ENCODE measurements at regions of chr7 and their contacts with region 1.

Region 1: DNA sequence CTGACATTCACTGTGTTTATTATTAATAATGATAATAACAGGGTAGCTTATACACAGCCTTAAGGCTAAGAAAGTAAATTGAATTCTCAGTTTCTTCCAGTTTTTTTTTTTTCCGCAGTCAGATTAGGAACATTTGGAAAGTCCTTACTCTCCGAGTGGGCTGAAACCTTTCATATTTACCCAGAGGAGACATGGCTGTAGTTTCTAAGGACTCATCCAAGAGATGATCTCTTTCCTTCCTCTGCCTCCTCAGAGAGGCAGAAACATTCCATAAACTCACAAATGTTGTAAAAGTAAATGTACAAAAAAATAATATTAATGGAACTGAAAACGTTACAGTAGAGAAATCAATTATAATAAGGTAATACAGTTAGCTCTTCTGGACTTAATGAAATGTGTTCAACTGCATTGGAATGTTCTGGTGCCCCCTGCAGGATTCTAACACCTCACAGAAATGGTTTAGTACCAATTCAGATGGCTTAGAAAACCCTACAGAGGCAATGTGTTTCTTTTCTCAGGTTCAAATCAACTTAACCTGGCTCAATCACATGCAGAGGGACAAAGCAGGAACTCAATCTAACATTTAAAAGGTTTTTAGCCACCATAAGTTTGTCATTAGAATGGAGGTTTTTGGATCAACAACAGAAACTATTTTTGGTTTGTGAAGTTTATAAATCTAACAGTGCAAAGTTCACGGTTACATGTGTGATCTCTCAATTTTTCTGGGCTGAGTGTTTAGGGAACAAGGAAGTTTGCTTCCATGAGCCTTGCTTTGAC is 71.7 kb downstream of the ICA1 start:
- DNase-seq: peak; percentile 80
- H3K4me3 Mint-ChIP-seq: no peak overlapping the region
- H3K27ac Mint-ChIP-seq: peak overlapping the region; percentile 16
- H3K4me1 Mint-ChIP-seq: peaks cover 30% of the 10 kb centered on the region
- H3K27me3 Mint-ChIP-seq: peaks cover 8% of the 10 kb centered on the region

Region 2: DNA sequence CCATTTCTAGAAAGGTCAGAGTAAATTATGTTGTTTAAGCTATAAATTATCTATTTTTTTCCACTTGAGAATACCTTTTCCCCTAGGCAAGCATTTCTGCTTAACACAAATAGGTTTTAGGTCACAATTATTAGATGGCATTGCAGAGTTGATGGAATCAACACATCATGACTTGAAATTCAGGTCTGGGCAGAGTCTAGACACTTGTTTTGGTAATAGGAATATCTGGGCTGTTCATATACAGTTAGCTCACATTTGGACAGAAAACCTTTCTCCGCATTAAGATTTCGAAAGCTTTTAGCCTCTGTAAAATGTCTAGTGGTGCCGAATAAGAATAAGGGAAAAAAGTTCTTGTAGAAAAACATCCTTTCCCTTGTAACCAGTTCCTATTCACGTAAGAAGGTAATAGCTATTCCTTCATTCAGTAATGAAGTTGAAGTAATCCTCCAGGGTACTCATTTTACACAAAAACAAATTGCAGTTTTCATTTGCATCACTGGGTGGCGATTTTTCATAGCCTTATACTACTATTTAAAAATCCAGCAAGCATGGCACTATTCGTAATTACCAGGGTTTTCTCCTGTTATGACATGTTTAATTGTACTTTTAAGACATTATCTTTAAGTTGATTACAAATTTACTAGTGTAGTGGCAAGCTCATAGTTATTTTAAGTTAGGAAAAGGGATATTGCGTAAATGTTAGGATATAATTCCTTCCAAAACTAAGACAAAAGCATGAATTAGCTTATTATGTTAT is 508.9 kb before region 1 on chr7:
- CTCF ChIA-PET with region 1: interaction called, 11 read pairs
- POLR2A ChIA-PET with region 1: no interaction called
- DNase-seq: peak; percentile 67
- H3K4me3 Mint-ChIP-seq: no peak overlapping the region
- H3K27ac Mint-ChIP-seq: peak overlapping the region; percentile 16
- H3K4me1 Mint-ChIP-seq: peaks cover 20% of the 10 kb centered on the region
- H3K27me3 Mint-ChIP-seq: no peaks in the 10 kb centered on the region

Region 3: GRCh38 chr7:7969306-7970236 is 220.7 kb before region 1 on chr7:
- CTCF ChIA-PET with region 1: no interaction called
- POLR2A ChIA-PET with region 1: no interaction called
- DNase-seq: peak; percentile 48
- H3K4me3 Mint-ChIP-seq: peak overlapping the region; percentile 74
- H3K27ac Mint-ChIP-seq: peak overlapping the region; percentile 79
- H3K4me1 Mint-ChIP-seq: peaks cover 24% of the 10 kb centered on the region
- H3K27me3 Mint-ChIP-seq: no peaks in the 10 kb centered on the region

Region 4: GRCh38 chr7:8114175-8114574 is 76.1 kb before region 1 on chr7:
- CTCF ChIA-PET with region 1: no interaction called
- POLR2A ChIA-PET with region 1: no interaction called
- DNase-seq: no peak
- H3K4me3 Mint-ChIP-seq: no peak overlapping the region
- H3K27ac Mint-ChIP-seq: peak overlapping the region; percentile 28
- H3K4me1 Mint-ChIP-seq: peaks cover 52% of the 10 kb centered on the region
- H3K27me3 Mint-ChIP-seq: no peaks in the 10 kb centered on the region

Region 5: DNA sequence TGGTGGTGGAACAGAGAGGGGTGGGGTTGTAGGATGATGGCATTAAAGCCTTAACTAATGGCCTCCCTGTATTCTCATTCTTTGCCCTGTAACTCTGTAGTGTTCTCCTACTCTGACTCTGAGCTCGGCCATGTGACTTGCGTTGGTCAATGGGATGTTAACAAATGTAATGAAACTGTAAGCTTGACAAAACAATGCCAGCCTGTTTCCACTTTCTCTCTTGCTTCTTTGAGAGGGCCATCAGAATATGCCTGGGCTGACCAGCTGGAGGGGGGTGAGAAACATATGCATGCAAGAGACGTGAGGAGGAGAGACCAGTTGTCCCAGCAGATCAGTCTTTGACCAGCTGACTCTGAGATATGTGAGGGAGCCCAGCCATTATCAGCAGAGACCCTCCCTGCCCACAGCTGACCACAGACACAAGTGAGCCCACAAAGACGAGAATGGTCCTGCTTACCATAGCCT is 28.9 kb before region 1 on chr7:
- CTCF ChIA-PET with region 1: no interaction called
- POLR2A ChIA-PET with region 1: no interaction called
- DNase-seq: no peak
- H3K4me3 Mint-ChIP-seq: no peak overlapping the region
- H3K27ac Mint-ChIP-seq: no peak overlapping the region
- H3K4me1 Mint-ChIP-seq: no peaks in the 10 kb centered on the region
- H3K27me3 Mint-ChIP-seq: no peaks in the 10 kb centered on the region

Measured in activated CD4-positive, alpha-beta T cell treated with anti-CD3 and anti-CD28 coated beads, Interleukin-2, amount 10 ng/mL, durations not matched to agents 7 days and 5 days (primary cell).